ENCODE measurements at regions of chr13 and their contacts with region 1.

Region 1: DNA sequence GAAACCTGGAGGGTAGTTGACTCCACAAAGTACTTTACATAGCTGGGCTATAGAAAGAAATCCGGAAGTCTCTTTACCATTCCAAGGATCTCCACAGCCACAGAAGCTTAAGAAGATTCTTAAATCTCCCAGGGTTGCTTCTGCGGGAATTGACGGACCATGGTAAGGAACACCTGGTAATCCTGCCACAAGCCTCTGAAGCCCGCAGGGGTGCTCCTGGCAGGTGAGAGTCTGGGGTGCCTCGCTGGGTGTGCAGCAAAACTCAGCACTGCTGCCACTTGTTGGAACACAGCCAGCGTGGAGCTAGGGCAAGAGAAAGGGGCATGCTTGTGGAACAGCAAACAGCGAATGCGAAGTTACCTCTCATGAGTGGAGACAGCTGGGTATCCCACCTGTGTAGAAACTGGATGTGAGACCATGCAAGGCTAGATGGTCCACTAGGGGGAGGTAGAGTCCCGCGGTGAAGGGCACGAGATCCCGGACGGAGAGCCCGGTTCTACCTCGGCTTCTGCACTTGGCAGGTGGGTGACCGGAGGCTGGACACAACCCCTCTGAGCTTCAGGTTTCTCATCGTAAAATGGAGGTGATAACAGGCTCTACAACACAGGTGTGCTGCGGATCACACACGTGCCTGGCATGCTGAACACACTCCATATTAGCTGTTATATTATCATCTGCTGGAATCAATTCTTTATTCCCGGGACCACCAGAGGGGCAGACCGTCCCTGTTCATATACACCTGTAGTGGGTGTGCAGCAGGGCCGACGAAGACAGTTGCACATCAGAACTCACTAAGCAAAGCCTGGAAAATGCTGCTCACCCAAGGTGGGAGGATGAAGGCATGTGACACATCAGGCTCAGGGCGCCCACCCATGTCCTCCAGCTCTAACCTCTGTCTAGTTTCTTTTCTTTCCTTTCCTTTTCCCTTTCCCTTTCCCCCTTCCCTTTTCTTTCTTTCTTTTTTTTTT is 24.1 kb upstream of the UBAC2 start:
- DNase-seq: peak; percentile 86
- CTCF ChIP-seq: peak; percentile 88

Region 2: GRCh38 chr13:99087096-99087953 is 89.3 kb before region 1 on chr13:
- CTCF ChIA-PET with region 1: no interaction called
- POLR2A ChIA-PET with region 1: no interaction called
- DNase-seq: peak; percentile 97
- CTCF ChIP-seq: no peak

Region 3: GRCh38 chr13:99165753-99166587 is 10.6 kb before region 1 on chr13:
- CTCF ChIA-PET with region 1: interaction called, 10 read pairs
- POLR2A ChIA-PET with region 1: no interaction called
- DNase-seq: no peak
- CTCF ChIP-seq: no peak

Region 4: GRCh38 chr13:99208845-99209527 is 32.4 kb after region 1 on chr13:
- CTCF ChIA-PET with region 1: interaction called, 24 read pairs
- POLR2A ChIA-PET with region 1: no interaction called
- DNase-seq: no peak
- CTCF ChIP-seq: no peak

Region 5: GRCh38 chr13:99250982-99251825 is 74.6 kb after region 1 on chr13:
- CTCF ChIA-PET with region 1: interaction called, 24 read pairs
- POLR2A ChIA-PET with region 1: no interaction called
- DNase-seq: no peak
- CTCF ChIP-seq: no peak

Region 6: GRCh38 chr13:99275093-99275469 is 98.5 kb after region 1 on chr13:
- CTCF ChIA-PET with region 1: interaction called, 290 read pairs
- POLR2A ChIA-PET with region 1: no interaction called
- DNase-seq: no peak
- CTCF ChIP-seq: no peak

Measured in GM10248 (cell line).